ENCODE measurements at regions of chr6 and their contacts with region 1.

Region 1: DNA sequence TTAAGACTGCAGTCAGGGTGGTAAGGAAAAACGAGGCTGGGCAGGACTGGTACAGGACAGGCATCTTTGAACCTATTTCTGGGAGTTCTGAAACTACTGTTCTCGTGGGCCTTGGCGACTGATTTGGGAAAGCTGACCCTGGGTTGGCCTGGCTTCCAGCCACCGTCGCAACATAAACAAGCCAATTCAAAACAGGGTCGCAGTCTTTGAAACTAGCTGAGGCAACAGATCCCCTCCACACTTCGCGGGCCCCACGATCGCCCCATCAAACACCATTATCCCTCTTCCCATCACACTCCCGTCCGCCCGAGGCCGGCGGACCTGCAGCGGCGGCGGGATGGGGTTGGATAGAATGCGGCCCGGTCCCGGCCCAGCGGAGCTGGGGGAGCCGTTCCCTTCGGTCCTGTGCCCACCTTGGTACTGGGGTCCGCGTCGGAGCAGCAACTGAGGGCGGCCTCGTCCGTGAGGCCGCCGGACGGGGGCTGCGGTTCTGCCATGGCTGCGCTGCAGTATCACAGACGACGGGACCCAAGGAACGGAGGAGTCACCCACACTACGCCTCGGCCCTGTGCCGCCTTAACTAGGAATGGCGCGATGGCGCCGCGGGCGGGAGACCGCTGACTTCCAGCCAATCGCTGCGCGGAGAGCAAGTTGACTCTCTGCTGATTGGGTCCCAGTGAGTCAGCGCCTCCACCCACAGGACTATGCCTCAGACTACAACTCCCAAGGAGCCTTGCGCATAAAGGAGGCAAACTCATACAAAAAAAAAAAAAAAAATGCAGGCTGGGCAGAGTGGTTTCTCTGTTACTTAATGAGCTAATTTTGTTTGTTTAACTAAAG is at the start of gene GLO1:
- DNase-seq: peak; percentile 98
- ATAC-seq: peak; percentile 100
- H3K4me3 Mint-ChIP-seq: peak within 1 kb of the TSS; percentile 96
- H3K27ac Mint-ChIP-seq: peak within 1 kb of the TSS; percentile 98
- H3K4me1 Mint-ChIP-seq: peaks cover 38% of the 10 kb centered on the region
- H3K27me3 Mint-ChIP-seq: peaks cover 3% of the 10 kb centered on the region
- total RNA-seq, gene GLO1: 150 to 152 TPM

Region 2: GRCh38 chr6:37432916-37433656 is 1269.7 kb before region 1 on chr6 and contains the start of gene CMTR1:
- CTCF ChIA-PET with region 1: no interaction called
- POLR2A ChIA-PET with region 1: no interaction called
- intact Hi-C with region 1: loop called in 1 of 2 experiments (anchors 1 kb)
- DNase-seq: peak; percentile 98
- ATAC-seq: peak; percentile 88
- H3K4me3 Mint-ChIP-seq: peak within 1 kb of the TSS; percentile 98
- H3K27ac Mint-ChIP-seq: peak within 1 kb of the TSS; percentile 99
- H3K4me1 Mint-ChIP-seq: peaks cover 36% of the 10 kb centered on the region
- H3K27me3 Mint-ChIP-seq: peaks cover 4% of the 10 kb centered on the region
- total RNA-seq, gene CMTR1: 65.3 to 74.6 TPM

Region 3: GRCh38 chr6:38316099-38316868 is 386.5 kb before region 1 on chr6:
- CTCF ChIA-PET with region 1: no interaction called
- POLR2A ChIA-PET with region 1: no interaction called
- intact Hi-C with region 1: no loop called
- DNase-seq: no peak
- ATAC-seq: no peak
- H3K4me3 Mint-ChIP-seq: no peak overlapping the region
- H3K27ac Mint-ChIP-seq: no peak overlapping the region
- H3K4me1 Mint-ChIP-seq: no peaks in the 10 kb centered on the region
- H3K27me3 Mint-ChIP-seq: no peaks in the 10 kb centered on the region

Region 4: GRCh38 chr6:38639498-38640215 is 63.1 kb before region 1 on chr6 and contains the start of gene BTBD9:
- CTCF ChIA-PET with region 1: no interaction called
- POLR2A ChIA-PET with region 1: no interaction called
- intact Hi-C with region 1: loop called (anchors 1 kb)
- DNase-seq: peak; percentile 89
- ATAC-seq: peak; percentile 71
- H3K4me3 Mint-ChIP-seq: peak within 1 kb of the TSS; percentile 82
- H3K27ac Mint-ChIP-seq: peak within 1 kb of the TSS; percentile 82
- H3K4me1 Mint-ChIP-seq: peaks cover 40% of the 10 kb centered on the region
- H3K27me3 Mint-ChIP-seq: no peaks in the 10 kb centered on the region
- total RNA-seq, gene BTBD9: 8.2 to 12.2 TPM

Region 5: GRCh38 chr6:38713812-38714211 is 11.0 kb after region 1 on chr6:
- CTCF ChIA-PET with region 1: interaction called, 7 read pairs
- POLR2A ChIA-PET with region 1: interaction called, 5 read pairs
- intact Hi-C with region 1: loop called in 1 of 2 experiments (anchors 2 kb)
- DNase-seq: peak; percentile 78
- ATAC-seq: peak; percentile 74
- H3K4me3 Mint-ChIP-seq: no peak overlapping the region
- H3K27ac Mint-ChIP-seq: peak overlapping the region; percentile 39
- H3K4me1 Mint-ChIP-seq: peaks cover 22% of the 10 kb centered on the region
- H3K27me3 Mint-ChIP-seq: peaks cover 17% of the 10 kb centered on the region

Region 6: GRCh38 chr6:39228992-39229767 is 526.4 kb after region 1 on chr6 and contains the start of gene KCNK5:
- CTCF ChIA-PET with region 1: no interaction called
- POLR2A ChIA-PET with region 1: no interaction called
- intact Hi-C with region 1: loop called in 1 of 2 experiments (anchors 1 kb)
- DNase-seq: peak; percentile 94
- ATAC-seq: peak; percentile 93
- H3K4me3 Mint-ChIP-seq: peak within 1 kb of the TSS; percentile 86
- H3K27ac Mint-ChIP-seq: peak within 1 kb of the TSS; percentile 86
- H3K4me1 Mint-ChIP-seq: peaks cover 36% of the 10 kb centered on the region
- H3K27me3 Mint-ChIP-seq: peaks cover 2% of the 10 kb centered on the region
- total RNA-seq, gene KCNK5: 12.7 to 15.8 TPM

Measured in activated CD4-positive, alpha-beta T cell treated with anti-CD3 and anti-CD28 coated beads for 36 hours (primary cell).